Activated naive CD4-positive, alpha-beta T cell treated with anti-CD3 and anti-CD28 coated beads, Interleukin-2, amount 10 ng/mL, durations not matched to agents 7 days and 5 days (primary cell): ENCODE measurements at regions of chr10 and their contacts with region 1.

Region 1: DNA sequence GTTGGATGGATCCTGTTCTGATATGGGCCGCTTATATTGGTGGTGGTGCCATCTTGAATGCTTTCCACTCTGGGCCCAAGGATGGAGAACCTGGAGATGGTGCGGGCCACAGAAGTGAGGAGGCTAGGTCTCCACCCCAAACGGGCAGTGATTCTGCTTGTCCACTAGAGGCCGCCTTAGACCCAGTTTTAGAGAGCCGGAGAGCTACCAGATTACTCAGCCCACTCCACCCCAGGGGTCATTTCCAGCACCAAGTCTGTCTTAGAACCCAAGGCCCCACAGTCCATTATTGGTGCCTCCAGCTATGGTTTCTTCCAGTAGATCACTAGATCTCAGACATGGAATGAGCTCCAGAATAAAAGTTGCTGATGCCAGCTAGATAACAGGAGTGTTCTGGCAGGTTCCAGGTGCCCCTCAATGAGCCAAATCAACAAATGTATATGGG is 11.8 kb upstream of the CAMK2G start:
- DNase-seq: peak; percentile 77
- H3K4me3 Mint-ChIP-seq: no peak overlapping the region
- H3K27ac Mint-ChIP-seq: no peak overlapping the region
- H3K4me1 Mint-ChIP-seq: peaks cover 2% of the 10 kb centered on the region
- H3K27me3 Mint-ChIP-seq: peaks cover 18% of the 10 kb centered on the region

Region 2: DNA sequence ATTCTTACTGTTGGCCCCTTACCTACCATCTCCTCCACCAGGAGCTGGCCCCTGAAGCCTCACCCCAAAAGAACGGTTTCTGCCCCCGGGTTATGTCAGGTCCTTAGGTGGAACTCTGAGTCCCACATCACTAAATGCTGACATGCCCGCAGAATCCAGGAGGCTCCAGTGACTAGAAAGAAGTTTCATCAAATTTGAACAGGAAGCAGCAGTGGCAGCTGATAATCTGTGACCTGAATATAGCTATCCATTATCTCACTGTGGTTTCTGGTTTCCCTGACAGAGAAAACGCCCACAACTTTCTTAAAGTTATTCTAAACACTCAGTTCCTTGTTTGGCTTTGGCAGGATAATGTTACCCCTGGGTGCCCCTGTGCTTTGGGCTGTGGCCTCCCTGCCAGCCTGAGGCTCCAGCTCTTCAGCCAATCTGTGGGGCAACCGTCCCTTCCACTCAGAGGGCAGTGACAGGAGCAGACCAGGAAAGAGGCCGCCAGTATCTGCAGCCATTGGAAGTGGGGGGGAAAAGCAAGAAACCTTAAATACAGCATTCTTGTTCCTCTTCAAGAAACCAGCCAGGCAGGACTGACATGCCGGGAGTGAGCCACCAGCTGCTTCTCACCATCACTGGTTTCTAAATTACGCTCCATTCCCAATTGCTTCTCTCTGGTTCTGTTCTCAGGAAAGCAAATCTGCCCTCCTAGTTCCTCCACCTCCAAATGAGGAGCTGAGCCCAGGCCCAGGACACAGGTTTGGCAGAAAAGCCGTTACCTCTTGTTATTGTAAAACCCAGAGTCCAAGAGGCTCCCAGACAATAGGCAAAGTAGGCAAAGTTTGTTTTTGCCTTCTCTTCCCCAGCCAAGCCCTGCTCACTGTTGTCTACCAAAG is 70.6 kb after region 1 on chr10:
- CTCF ChIA-PET with region 1: interaction called, 37 read pairs
- DNase-seq: peak; percentile 57
- H3K4me3 Mint-ChIP-seq: peak overlapping the region; percentile 61
- H3K27ac Mint-ChIP-seq: peak overlapping the region; percentile 98
- H3K4me1 Mint-ChIP-seq: peaks cover 65% of the 10 kb centered on the region
- H3K27me3 Mint-ChIP-seq: no peaks in the 10 kb centered on the region

Region 3: DNA sequence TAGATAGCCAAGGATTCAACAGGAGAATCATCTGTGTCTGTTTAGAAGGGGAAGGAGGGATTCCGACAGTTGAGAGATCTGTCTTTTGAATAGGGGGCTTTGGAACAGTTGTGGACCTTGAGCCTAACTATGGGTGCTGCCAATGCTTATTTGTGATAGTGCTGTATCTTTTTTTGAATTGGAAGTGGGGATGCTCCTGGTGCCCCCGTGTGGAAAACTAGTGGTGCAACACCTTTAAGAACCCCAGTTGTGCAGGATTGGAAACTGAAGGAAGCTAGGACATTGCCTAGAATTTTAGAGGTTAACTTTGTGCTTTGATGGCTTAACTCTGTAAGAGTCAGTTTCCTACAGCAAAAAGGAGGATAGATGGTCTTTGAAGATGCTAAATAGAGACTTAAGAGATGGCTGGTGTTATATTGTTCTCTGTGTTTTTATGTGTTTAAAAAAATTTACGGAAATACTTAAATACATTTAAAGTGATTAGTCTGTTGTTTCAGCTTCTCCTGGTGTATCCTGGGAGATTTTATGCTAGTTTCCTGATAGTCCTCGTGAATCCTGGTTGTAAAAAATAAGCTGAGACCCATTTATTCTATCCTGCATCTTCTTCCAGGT is 195.2 kb after region 1 on chr10:
- CTCF ChIA-PET with region 1: interaction called, 75 read pairs
- DNase-seq: peak; percentile 58
- H3K4me3 Mint-ChIP-seq: no peak overlapping the region
- H3K27ac Mint-ChIP-seq: no peak overlapping the region
- H3K4me1 Mint-ChIP-seq: peaks cover 21% of the 10 kb centered on the region
- H3K27me3 Mint-ChIP-seq: no peaks in the 10 kb centered on the region

Region 4: GRCh38 chr10:74103560-74104248 is 217.6 kb after region 1 on chr10:
- CTCF ChIA-PET with region 1: interaction called, 33 read pairs
- DNase-seq: no peak
- H3K4me3 Mint-ChIP-seq: no peak overlapping the region
- H3K27ac Mint-ChIP-seq: no peak overlapping the region
- H3K4me1 Mint-ChIP-seq: peaks cover 6% of the 10 kb centered on the region
- H3K27me3 Mint-ChIP-seq: no peaks in the 10 kb centered on the region